Astrocyte of the cerebellum (primary cell): ENCODE measurements at regions of chr1 and their contacts with region 1.

Region 1: GRCh38 chr1:233639611-233640010 is 25.7 kb downstream of the KCNK1 start:
- DNase-seq: peak; percentile 69
- H3K4me3 ChIP-seq: no peak overlapping the region
- CTCF ChIP-seq: no peak

Region 2: DNA sequence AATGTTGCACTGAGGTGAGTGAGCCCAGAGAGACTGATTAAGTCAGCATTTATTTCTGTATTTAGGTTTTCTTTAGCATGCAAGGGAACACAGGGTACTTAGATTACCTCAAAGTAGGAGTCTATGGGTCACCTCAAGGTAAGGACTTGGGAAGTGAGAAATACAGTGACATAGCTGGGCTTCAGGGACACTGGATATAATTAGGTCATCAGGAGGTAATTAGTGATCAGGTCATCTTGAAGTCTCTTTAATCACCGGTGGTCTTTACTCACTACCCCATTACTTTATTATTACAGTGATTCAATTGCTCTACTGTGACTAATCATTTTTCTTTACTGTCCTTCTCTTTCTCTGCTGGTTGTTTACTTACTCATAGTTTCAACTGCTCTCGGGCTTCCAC is 85.6 kb before region 1 on chr1:
- in situ Hi-C with region 1: no loop called
- DNase-seq: no peak
- H3K4me3 ChIP-seq: no peak overlapping the region
- CTCF ChIP-seq: no peak

Region 3: GRCh38 chr1:233587958-233588799 is 51.4 kb before region 1 on chr1:
- in situ Hi-C with region 1: loop called (anchors 5 kb)
- DNase-seq: no peak
- H3K4me3 ChIP-seq: no peak overlapping the region
- CTCF ChIP-seq: no peak

Region 4: GRCh38 chr1:233695901-233696300 is 56.3 kb after region 1 on chr1:
- in situ Hi-C with region 1: no loop called
- DNase-seq: no peak
- H3K4me3 ChIP-seq: no peak overlapping the region
- CTCF ChIP-seq: no peak